ENCODE measurements at regions of chr9 and their contacts with region 1.

Region 1: DNA sequence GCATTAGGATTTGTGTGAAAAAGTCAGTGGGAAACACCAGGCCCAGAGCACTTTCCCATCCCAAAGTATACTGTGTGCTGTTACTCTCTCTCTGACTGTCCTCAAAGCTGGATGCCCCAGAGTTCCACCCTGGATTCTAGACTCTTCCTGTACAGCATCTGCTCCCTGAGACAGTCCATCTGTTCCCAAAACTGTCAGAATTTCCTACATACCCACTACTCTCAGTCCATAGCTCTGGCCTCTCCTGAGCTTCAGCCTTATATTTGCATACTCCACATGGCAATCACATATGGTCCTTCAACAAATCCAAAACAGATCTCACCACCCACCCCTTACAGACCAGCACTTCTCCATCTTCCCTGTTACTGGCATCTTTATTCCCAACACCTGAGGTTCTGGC is 9.5 kb downstream of the ELP1 start:
- DNase-seq: no peak
- H3K4me3 ChIP-seq: no peak overlapping the region
- CTCF ChIP-seq: no peak
- POLR2A ChIP-seq: no peak

Region 2: GRCh38 chr9:108746864-108747263 is 177.6 kb before region 1 on chr9:
- intact Hi-C with region 1: no loop called
- DNase-seq: no peak
- H3K4me3 ChIP-seq: no peak overlapping the region
- CTCF ChIP-seq: no peak
- POLR2A ChIP-seq: no peak

Region 3: GRCh38 chr9:108874058-108874788 is 50.2 kb before region 1 on chr9:
- intact Hi-C with region 1: loop called (anchors 10 kb)
- DNase-seq: no peak
- H3K4me3 ChIP-seq: no peak overlapping the region
- CTCF ChIP-seq: no peak
- POLR2A ChIP-seq: no peak